Transverse colon (tissue), 4 donors: ENCODE measurements at regions of chr18 and their contacts with region 1.

Region 1: DNA sequence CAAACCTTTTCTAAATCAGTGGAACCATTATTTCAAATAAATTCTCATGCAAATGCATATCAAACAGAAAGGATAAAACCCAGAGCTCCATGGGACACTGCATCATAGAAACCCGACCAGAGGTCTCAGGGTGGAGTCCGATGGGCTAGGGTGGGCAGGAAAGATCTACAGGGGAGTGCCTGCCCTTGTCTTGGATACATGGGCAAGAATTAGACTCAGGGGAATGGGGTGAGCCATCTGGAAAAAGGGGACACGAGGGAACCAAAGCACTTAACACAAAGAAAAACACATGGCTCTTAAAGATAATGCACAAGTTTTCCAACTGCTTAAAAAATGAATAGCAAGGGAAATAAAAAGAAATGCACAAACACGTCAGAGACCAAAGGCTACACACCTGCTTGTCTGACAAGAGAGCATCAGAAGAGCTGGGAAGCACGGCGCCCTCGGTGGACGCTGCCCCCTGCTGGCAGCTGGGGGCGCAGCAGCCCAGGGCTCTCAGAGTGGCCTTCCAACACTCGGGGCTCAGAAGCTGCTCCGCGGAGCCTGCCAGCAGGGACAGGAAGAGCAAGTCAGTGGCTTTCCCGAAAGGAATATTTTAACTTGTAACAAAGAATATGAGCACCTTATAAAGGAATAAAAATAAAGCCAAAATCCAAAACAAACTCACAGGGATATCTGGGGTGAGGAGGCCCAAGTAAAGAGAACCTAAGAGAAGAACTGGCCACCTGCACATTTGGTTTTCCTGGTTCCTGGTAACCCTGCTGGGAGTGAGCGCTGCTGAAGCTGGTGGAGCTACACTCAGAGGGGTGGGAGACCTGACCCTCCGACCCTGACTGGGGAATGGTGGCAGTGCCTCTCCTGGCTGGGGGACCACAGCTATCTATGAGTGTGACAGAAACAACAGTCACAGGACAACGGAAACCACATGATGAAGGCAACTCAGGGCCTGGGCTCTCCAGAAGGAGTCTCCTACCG is 54.5 kb downstream of the SIGLEC15 start:
- DNase-seq: peak; percentile 64
- H3K4me3 ChIP-seq: no peak overlapping the region
- H3K27ac ChIP-seq: no peak overlapping the region
- H3K4me1 ChIP-seq: peaks cover 0 to 4% (median 0%) of the 10 kb centered on the region in 4 donors
- H3K27me3 ChIP-seq: no peaks in the 10 kb centered on the region
- CTCF ChIP-seq: peak; percentile 88 to 99 (median 99)
- EP300 ChIP-seq: no peak
- POLR2A ChIP-seq: no peak

Region 2: DNA sequence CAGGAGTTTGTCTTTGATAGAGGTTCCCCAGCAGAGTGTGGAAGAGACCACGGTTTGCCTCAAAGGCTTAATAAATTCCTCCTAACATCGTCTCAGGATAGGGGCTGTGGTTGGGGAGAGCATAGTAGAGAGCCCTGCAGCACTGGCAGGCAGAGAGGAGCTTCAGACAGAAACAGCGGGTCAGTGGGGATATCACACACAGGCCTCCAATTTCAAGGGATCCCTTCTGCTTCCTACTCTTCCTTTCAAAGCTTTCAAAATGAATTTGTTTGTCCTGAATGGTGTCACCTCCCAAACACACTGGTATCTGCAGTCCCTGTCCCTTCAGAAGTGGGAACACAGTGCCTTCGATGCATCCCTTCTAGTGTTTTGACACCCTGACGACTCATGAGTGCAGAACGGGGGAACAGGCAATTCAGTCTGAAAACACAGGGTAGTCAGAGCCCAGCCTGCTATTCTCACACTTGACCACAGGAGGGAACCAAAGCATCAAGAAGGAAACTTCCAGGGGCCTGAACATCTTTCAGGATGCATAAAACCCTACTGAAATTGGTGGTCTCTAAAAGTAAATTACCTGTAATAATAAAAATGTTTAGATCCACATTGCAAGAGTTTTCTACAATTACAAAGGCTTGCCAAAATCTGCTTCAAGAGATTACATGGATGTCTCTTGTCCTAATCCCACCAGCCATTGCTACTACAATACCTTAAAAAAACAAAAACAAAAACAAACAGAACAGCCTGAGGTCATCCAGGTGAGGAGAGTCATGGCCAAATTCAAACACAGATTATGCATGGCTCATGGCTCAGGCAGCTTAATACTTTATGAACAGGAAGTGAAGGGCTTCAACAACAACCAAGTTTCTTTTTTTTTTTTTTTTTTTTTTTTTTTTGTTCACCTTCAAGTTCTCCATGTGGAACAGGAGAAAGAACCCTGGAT is 214.9 kb before region 1 on chr18:
- in situ Hi-C with region 1: loop called in 1 of 4 experiments (anchors 25 kb)
- intact Hi-C with region 1: no loop called
- DNase-seq: peak; percentile 63
- H3K4me3 ChIP-seq: no peak overlapping the region
- H3K27ac ChIP-seq: no peak overlapping the region
- H3K4me1 ChIP-seq: peaks cover 0 to 4% (median 0%) of the 10 kb centered on the region in 4 donors
- H3K27me3 ChIP-seq: no peaks in the 10 kb centered on the region
- CTCF ChIP-seq: peak; percentile 78 to 93 (median 92)
- EP300 ChIP-seq: no peak
- POLR2A ChIP-seq: no peak

Region 3: DNA sequence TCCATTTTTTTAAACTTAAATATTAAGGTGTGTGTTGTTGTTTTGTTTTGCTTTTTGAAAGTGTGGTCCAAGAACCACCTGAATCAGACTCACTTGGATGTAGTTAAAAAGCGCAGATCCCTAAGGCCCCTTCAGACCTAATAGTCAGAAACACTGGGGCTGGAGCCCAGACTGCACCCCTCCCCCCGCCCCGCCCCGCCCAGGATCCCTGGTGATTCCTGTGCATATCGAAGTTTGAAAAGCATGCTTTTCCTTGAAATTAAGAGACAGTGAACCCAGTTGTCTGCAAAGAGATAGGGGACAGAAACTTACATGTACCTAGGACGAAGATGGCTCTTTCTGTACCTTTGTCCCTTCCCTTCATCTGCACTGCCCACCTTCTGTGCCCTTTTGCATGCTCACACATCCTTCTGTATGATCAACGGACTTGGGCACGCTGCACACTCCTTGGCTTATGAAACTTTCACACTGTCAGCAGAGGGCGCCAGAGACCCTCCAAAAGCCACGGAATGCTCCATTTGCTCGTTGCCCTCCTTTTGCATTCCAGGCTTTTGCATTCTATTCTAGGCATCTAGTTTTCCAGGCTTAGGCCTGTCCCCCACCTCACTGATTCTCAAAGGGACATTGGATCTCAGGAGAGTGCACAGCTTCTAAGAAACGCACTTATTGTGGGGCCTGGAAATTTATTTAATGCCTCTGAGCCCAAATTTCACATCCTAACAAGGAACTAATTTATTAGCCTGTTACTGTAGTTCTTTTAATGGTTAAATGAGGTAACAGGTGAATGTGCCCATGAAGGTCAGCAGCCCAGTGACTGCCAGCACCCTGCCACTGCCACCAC is 188.8 kb before region 1 on chr18:
- in situ Hi-C with region 1: loop called in 2 of 4 experiments (anchors 10 kb)
- intact Hi-C with region 1: loop called (anchors 5 kb)
- DNase-seq: peak; percentile 79
- H3K4me3 ChIP-seq: no peak overlapping the region
- H3K27ac ChIP-seq: no peak overlapping the region
- H3K4me1 ChIP-seq: peaks cover 0 to 5% (median 0%) of the 10 kb centered on the region in 4 donors
- H3K27me3 ChIP-seq: no peaks in the 10 kb centered on the region
- CTCF ChIP-seq: peak; percentile 66 to 80 (median 73)
- EP300 ChIP-seq: no peak
- POLR2A ChIP-seq: no peak

Region 4: GRCh38 chr18:46213295-46213694 is 333.3 kb after region 1 on chr18:
- in situ Hi-C with region 1: no loop called
- intact Hi-C with region 1: no loop called
- DNase-seq: no peak
- H3K4me3 ChIP-seq: no peak overlapping the region
- H3K27ac ChIP-seq: no peak overlapping the region
- H3K4me1 ChIP-seq: no peaks in the 10 kb centered on the region
- H3K27me3 ChIP-seq: no peaks in the 10 kb centered on the region
- CTCF ChIP-seq: peak; percentile 25 to 55 (median 43)
- EP300 ChIP-seq: no peak
- POLR2A ChIP-seq: no peak